ENCODE measurements at regions of chr9 and their contacts with region 1.

Region 1: DNA sequence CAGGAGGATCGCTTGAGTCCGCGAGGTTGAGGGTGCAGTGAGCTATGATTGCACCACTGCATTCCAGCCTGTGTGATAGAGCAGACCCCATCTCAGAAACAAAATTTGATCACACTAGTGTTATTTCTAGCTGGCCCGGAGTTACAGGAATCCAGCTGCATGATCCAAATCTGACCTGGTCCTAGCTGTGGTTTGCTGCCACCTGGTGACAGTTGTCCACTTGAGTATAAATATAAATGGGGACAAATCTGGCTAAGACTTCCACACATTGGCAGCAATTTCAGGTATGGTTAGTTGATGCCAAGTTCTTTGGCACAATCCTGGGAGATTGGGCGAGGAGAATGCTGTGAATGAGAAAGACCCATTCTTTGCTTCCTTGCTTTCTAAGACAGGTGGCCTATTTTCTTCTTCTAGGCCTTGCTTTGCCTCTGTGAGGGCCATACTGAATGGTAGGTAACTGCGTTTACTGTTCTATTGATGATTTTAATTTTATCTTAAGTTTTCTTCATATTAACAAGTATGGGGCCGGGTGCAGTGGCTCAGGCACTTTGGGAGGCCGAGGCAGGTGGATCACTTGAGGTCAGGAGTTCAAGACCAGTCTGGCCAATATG is 35.4 kb downstream of the UBE2R2 start:
- DNase-seq: peak; percentile 47 to 75
- ATAC-seq: peak; percentile 81 to 90
- H3K4me3 ChIP-seq: no peak overlapping the region
- H3K27ac ChIP-seq: peak overlapping the region in 1 of 2 experiments; percentile 59; a peak in 1 of 6 replicates
- H3K4me1 ChIP-seq: peaks cover 66% of the 10 kb centered on the region
- CTCF ChIP-seq: peak; percentile 83
- EP300 ChIP-seq: no peak
- POLR2A ChIP-seq: no peak
- RAD21 ChIP-seq: peak; percentile 85 to 87

Region 2: GRCh38 chr9:33737811-33738606 is 114.3 kb before region 1 on chr9:
- CTCF ChIA-PET with region 1: interaction called, 19 read pairs
- POLR2A ChIA-PET with region 1: no interaction called
- DNase-seq: peak; percentile 47 to 81
- ATAC-seq: peak; percentile 95 to 99
- H3K4me3 ChIP-seq: no peak overlapping the region
- H3K27ac ChIP-seq: peak overlapping the region in 1 of 2 experiments; percentile 38; a peak in 2 of 6 replicates
- H3K4me1 ChIP-seq: 0 out of 3 replicates have a peak, but pooled peaks cover 5% of the 10 kb centered on the region
- CTCF ChIP-seq: peak; percentile 88
- EP300 ChIP-seq: no peak
- POLR2A ChIP-seq: no peak
- RAD21 ChIP-seq: peak; percentile 85 to 89

Region 3: GRCh38 chr9:33809506-33809905 is 42.8 kb before region 1 on chr9:
- CTCF ChIA-PET with region 1: interaction called, 90 read pairs
- POLR2A ChIA-PET with region 1: interaction called, 4 read pairs
- DNase-seq: no peak
- ATAC-seq: no peak
- H3K4me3 ChIP-seq: no peak overlapping the region
- H3K27ac ChIP-seq: peak overlapping the region in 1 of 2 experiments; percentile 34; a peak in 3 of 6 replicates
- H3K4me1 ChIP-seq: peaks cover 44% of the 10 kb centered on the region
- CTCF ChIP-seq: no peak
- EP300 ChIP-seq: no peak
- POLR2A ChIP-seq: no peak
- RAD21 ChIP-seq: no peak

Region 4: DNA sequence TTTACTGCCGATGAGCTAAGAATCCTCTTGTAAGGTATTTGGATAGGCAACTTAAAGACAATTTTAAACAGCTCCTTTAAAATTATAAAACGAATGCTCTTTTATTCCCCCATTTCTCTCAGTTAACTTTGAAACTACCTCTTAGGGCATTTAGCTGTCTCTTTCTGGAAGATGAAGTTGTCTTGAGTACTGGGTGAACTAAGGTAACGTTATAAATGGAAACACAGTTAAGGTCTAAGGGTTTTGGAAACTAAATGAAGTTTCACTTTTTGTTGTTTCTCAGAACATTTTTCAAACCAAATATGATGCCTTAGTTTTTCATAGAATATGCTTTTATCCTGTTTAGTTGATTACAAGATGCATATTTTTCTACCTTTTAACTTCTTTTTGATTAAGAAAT is 28.5 kb before region 1 on chr9:
- CTCF ChIA-PET with region 1: interaction called, 12 read pairs
- POLR2A ChIA-PET with region 1: no interaction called
- DNase-seq: no peak
- ATAC-seq: no peak
- H3K4me3 ChIP-seq: no peak overlapping the region
- H3K27ac ChIP-seq: no peak overlapping the region
- H3K4me1 ChIP-seq: peaks cover 24% of the 10 kb centered on the region
- CTCF ChIP-seq: no peak
- EP300 ChIP-seq: no peak
- POLR2A ChIP-seq: no peak
- RAD21 ChIP-seq: no peak

Region 5: GRCh38 chr9:34178520-34179212 is 326.3 kb after region 1 on chr9 and contains the start of gene UBAP1:
- CTCF ChIA-PET with region 1: no interaction called
- POLR2A ChIA-PET with region 1: no interaction called
- DNase-seq: peak; percentile 97 to 98
- ATAC-seq: peak; percentile 95 to 99
- H3K4me3 ChIP-seq: peak within 1 kb of the TSS; percentile 88
- H3K27ac ChIP-seq: peak within 1 kb of the TSS; percentile 93 to 94
- H3K4me1 ChIP-seq: peaks cover 13% of the 10 kb centered on the region
- CTCF ChIP-seq: no peak
- EP300 ChIP-seq: no peak
- POLR2A ChIP-seq: peak; percentile 90
- RAD21 ChIP-seq: no peak; a peak in 1 of 5 replicates
- polyA plus RNA-seq, gene UBAP1: 73.1 and 86.7 TPM in 2 replicates

Measured in A549 (cell line).